ENCODE measurements at regions of chr4 and their contacts with region 1.

Region 1: DNA sequence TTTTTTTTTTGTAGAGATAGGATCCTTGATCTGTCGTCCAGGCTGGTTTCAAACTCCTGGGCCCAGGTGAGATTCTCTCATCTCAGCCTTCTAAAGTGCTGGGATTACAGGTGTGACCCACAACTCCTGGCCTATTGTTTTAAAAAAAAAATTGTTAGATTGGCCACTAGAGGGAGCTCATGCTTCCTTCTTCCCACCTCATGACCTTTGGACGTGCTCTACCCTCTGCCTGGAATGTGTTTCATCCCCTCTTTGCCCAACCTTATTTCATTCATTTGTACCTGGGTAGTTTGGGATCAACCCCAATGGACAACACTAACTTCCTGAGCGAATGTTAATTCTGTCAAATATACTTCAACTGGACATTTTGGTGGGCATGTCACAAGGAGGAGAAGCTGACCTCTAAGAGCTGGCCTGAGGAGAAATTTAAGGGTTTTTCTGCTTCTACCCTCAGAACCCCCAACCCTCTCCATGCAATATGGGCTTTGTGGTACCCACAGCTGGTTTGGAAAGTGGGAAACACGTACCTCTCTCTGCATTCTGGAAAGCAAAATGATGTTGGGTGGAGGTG is 6.4 kb downstream of the PPEF2 start:
- DNase-seq: peak; percentile 24
- ATAC-seq: peak; percentile 76
- H3K4me3 Mint-ChIP-seq: no peak overlapping the region
- H3K27ac Mint-ChIP-seq: no peak overlapping the region
- H3K4me1 Mint-ChIP-seq: no peaks in the 10 kb centered on the region
- H3K27me3 Mint-ChIP-seq: peaks cover 10% of the 10 kb centered on the region

Region 2: GRCh38 chr4:75644095-75644494 is 251.7 kb before region 1 on chr4:
- CTCF ChIA-PET with region 1: no interaction called
- POLR2A ChIA-PET with region 1: no interaction called
- DNase-seq: no peak
- ATAC-seq: no peak
- H3K4me3 Mint-ChIP-seq: no peak overlapping the region
- H3K27ac Mint-ChIP-seq: peak overlapping the region; percentile 40
- H3K4me1 Mint-ChIP-seq: peaks cover 15% of the 10 kb centered on the region
- H3K27me3 Mint-ChIP-seq: no peaks in the 10 kb centered on the region

Region 3: DNA sequence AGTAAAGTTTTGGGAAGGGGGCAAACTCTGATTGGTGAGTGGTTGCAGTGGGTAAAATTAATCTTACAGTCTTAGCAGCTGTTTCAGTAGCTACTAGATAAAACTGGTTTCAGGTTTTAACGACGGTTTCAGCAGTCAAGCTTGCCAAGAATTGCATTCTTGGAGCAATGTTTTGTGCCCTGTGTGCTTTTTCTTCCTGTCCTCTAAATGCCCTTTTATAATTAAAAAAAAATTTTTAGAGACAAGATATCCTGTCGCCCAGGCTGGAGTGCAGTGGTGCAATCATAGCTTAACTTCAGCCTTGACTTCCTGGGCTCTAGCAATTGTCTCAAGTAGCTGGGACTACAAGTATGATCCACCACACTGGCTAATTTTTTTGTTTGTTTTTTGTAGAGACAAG is 12.7 kb after region 1 on chr4:
- CTCF ChIA-PET with region 1: interaction called, 57 read pairs
- POLR2A ChIA-PET with region 1: no interaction called
- DNase-seq: no peak
- ATAC-seq: no peak
- H3K4me3 Mint-ChIP-seq: no peak overlapping the region
- H3K27ac Mint-ChIP-seq: no peak overlapping the region
- H3K4me1 Mint-ChIP-seq: no peaks in the 10 kb centered on the region
- H3K27me3 Mint-ChIP-seq: no peaks in the 10 kb centered on the region

Region 4: GRCh38 chr4:75916091-75916661 is 20.3 kb after region 1 on chr4:
- CTCF ChIA-PET with region 1: interaction called, 57 read pairs
- POLR2A ChIA-PET with region 1: no interaction called
- DNase-seq: peak; percentile 50
- ATAC-seq: peak; percentile 76
- H3K4me3 Mint-ChIP-seq: no peak overlapping the region
- H3K27ac Mint-ChIP-seq: no peak overlapping the region
- H3K4me1 Mint-ChIP-seq: peaks cover 2% of the 10 kb centered on the region
- H3K27me3 Mint-ChIP-seq: no peaks in the 10 kb centered on the region

Region 5: DNA sequence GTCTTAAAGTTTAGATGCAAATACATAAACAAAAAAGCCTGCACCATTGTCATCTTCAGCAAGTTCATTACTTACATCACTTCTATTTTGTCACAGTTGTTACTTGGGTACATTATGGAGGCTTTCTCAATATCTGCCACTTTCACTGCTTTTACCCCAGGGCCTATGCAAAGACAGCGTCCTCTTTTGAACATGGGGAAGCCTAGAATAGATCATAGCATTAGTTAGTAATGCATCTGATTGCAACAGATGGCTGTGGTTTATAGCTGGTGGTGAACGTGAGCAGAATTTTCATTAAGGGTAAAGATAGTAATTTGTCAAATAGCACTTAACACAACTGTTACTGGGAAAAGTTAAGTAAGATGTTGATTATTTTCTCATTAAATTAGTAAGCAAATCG is 139.3 kb after region 1 on chr4:
- CTCF ChIA-PET with region 1: no interaction called
- POLR2A ChIA-PET with region 1: no interaction called
- DNase-seq: no peak
- ATAC-seq: no peak
- H3K4me3 Mint-ChIP-seq: no peak overlapping the region
- H3K27ac Mint-ChIP-seq: no peak overlapping the region
- H3K4me1 Mint-ChIP-seq: no peaks in the 10 kb centered on the region
- H3K27me3 Mint-ChIP-seq: peaks cover 9% of the 10 kb centered on the region

Region 6: GRCh38 chr4:76067652-76068286 is 171.9 kb after region 1 on chr4:
- CTCF ChIA-PET with region 1: interaction called, 13 read pairs
- POLR2A ChIA-PET with region 1: no interaction called
- DNase-seq: peak; percentile 84
- ATAC-seq: peak; percentile 90
- H3K4me3 Mint-ChIP-seq: no peak overlapping the region
- H3K27ac Mint-ChIP-seq: no peak overlapping the region
- H3K4me1 Mint-ChIP-seq: no peaks in the 10 kb centered on the region
- H3K27me3 Mint-ChIP-seq: no peaks in the 10 kb centered on the region